Heart right ventricle (tissue), 16 donors: ENCODE measurements at regions of chr12 and their contacts with region 1.

Region 1: DNA sequence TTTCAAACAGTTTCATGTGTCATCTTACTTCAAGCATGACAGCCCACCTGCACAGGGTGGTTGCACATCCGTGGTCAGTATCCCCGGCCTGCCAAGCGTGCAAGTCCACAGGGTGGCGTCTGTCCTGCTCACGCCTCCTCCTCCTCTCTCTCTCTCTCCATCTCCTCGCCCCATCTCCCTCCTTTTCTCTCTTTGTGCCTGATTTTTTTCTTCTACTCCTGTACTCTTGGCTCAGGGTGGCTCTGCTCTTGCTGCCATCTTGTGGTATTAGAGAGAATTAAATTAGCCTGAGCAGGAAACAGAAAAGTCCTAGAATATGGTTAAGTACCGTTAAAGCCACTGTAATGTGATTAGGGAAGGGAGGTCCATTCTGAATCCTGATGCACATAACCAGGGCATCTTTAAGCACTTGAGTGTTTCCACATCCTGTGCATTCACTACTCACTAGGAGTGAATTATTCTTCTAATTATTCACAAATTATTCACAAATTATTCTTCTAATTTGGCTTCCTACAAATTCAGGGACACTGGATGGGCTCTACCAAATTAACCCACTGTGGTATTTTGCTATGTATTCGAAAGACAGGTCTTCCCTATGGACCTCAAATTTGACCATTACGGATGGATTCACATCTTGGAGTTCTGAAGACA is 25.5 kb upstream of the DTX1 start:
- DNase-seq: peak in 1 of 2 donors; percentile 13
- ATAC-seq: peak in 7 of 8 donors; percentile 41 to 83 (median 46)
- H3K4me3 ChIP-seq: no peak overlapping the region
- H3K27ac ChIP-seq: no peak overlapping the region
- H3K4me1 ChIP-seq: no peaks in the 10 kb centered on the region
- H3K27me3 ChIP-seq: peaks cover 0 to 22% (median 4%) of the 10 kb centered on the region in 7 donors
- CTCF ChIP-seq: peak; percentile 28 to 76 (median 68)

Region 2: DNA sequence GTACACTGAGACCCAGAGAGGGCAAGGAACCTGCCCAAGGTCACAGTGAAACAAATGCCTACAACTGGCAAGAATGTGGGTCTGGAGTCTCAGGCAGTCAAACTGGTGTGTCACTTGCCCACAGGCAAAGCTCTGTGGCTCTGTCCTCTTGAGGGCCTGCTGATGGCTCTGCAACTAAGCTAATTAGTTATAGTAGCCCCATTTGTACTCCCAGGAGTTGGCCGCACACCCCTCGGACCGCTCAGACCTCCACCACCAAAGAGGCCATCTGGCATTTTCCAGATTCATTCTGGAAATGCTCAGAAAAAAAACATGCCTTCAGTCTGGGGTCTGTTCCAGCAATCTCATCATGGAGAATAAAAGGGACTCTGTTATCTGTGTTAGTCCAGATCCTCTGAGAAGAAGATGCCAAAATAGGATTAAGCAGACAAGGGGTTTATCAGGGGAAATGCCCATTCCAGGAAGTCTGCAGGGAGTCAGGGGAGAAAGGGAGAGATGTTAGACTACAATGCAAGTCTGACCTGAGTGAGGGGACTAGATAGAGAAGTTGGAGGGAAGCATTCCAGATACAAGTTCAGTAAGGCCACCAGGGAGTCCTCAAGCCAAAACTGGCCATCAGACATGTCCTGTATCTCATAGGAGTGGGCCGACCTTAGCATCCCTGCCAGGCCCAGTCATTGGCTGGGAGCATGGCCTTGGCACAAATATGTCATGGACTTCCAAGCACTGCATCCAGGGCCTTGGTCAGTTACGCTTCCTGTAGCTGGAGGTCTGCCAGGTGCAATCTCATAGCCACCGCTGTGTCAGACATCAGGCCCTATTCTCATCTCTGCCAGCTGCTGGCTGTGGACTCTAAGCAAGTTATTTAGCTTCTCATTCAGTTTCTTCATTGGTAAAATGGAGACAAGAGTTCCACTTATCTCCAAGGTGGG is 139.6 kb before region 1 on chr12:
- intact Hi-C with region 1: loop called in 3 of 10 experiments (anchors 10 kb)
- DNase-seq: peak in 1 of 2 donors; percentile 9
- ATAC-seq: peak in 2 of 8 donors; percentile 25 to 47
- H3K4me3 ChIP-seq: no peak overlapping the region
- H3K27ac ChIP-seq: no peak overlapping the region
- H3K4me1 ChIP-seq: peaks cover 0 to 31% (median 0%) of the 10 kb centered on the region in 9 donors
- H3K27me3 ChIP-seq: peaks cover 0 to 19% (median 5%) of the 10 kb centered on the region in 7 donors
- CTCF ChIP-seq: no peak

Region 3: DNA sequence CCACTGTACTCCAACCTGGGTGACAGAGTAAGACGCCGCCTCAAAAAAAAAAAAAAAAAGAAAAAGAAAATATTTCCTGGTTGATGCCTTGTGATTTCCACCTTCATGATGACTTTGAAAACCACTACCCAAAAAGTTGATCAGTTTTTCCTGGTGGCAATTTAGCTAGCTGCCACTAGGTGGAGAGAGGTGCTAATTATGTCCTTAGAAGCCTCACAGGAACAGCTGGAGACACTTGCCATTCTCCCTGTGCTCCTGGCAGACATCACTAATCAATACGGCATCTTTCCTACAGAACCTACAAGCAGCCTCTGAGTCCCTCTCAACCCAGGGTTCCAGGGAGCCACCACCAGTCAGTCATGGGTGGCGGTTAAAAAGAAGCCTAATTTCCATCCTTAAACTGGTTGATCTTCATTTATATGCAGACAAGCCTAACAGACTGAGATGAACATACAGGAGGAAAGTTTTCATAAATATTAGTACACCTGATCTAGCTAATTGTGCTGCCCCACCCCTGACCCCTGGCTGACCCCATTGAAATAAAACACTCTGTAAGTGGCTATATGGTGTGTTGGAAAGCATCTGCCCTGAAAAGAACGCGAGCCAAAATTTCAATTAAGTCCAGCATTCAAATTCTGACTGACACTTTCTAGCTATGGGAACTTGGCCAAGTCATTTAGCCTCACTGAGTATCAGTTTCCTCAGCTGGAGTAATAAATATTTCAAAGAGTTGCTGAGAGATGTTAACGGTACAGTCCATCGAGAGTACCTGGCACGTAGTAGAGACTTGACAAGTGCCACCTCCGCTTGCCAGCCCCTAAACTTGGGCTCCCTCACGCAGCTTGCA is 130.5 kb before region 1 on chr12:
- intact Hi-C with region 1: loop called in 6 of 10 experiments (anchors 2 to 10 kb)
- DNase-seq: no peak
- ATAC-seq: peak in 2 of 8 donors; percentile 38 to 43
- H3K4me3 ChIP-seq: no peak overlapping the region
- H3K27ac ChIP-seq: no peak overlapping the region
- H3K4me1 ChIP-seq: peaks cover 0 to 25% (median 2%) of the 10 kb centered on the region in 9 donors
- H3K27me3 ChIP-seq: peaks cover 0 to 23% (median 14%) of the 10 kb centered on the region in 7 donors
- CTCF ChIP-seq: peak; percentile 25 to 76 (median 63)

Region 4: DNA sequence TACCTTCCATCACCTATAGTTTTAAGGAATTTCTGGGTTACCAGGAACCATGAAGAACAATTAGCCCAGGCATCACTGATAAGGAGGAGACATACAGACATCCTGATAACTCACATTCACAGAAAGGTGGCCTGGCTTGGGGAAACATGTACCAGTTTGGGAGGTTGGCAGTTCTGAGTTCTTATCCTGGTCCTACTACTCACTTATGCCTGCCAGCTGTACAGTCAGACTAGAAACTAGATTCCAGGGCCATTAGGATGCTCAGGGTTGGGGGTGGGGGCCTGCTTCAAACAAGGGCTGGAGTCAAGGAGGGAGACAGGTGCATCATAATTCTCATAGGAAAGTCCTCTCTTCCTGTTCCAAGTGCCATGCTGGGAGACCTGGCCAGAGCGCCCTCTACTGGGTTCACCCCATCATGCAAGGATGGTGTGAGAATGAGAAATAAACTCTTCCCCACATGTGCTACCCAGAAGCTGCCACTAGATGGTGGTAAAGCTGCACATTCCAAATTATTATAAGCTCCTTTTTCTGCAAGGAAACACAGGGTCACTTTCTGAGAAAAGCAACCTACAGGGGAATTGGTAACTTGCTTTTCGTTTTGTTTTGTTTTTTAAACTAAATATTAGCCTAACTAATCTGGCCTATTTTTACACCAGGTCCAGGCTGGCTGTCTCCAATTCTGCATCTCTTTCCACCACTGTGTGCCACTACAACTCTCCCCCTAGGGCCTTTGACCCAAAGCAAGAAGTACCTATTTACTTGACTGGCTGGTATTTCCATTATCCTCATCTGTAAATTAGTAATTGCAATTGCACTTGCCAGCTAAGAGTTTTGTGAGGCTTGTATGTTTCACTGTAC is 38.2 kb before region 1 on chr12:
- intact Hi-C with region 1: loop called in 2 of 10 experiments (anchors 2 to 5 kb)
- DNase-seq: peak; percentile 28 to 32
- ATAC-seq: peak in 3 of 8 donors; percentile 16 to 59 (median 42)
- H3K4me3 ChIP-seq: no peak overlapping the region
- H3K27ac ChIP-seq: no peak overlapping the region
- H3K4me1 ChIP-seq: no peaks in the 10 kb centered on the region
- H3K27me3 ChIP-seq: no peaks in the 10 kb centered on the region
- CTCF ChIP-seq: peak; percentile 56 to 94 (median 80)

Region 5: GRCh38 chr12:113292091-113292490 is 261.1 kb after region 1 on chr12:
- intact Hi-C with region 1: no loop called
- DNase-seq: no peak
- ATAC-seq: no peak
- H3K4me3 ChIP-seq: no peak overlapping the region
- H3K27ac ChIP-seq: no peak overlapping the region
- H3K4me1 ChIP-seq: peaks cover 0 to 43% (median 10%) of the 10 kb centered on the region in 9 donors
- H3K27me3 ChIP-seq: no peaks in the 10 kb centered on the region
- CTCF ChIP-seq: no peak